PC-3 (cell line): ENCODE measurements at regions of chr9 and their contacts with region 1.

Region 1: GRCh38 chr9:72022841-72023240 is 37.6 kb downstream of the C9orf57 start:
- DNase-seq: peak; percentile 64
- ATAC-seq: peak; percentile 81
- H3K4me3 ChIP-seq: no peak overlapping the region
- H3K27ac ChIP-seq: no peak overlapping the region
- H3K4me1 ChIP-seq: peaks cover 8% of the 10 kb centered on the region; the same call in 1 of the 2 replicates
- H3K27me3 ChIP-seq: no peaks in the 10 kb centered on the region
- CTCF ChIP-seq: no peak

Region 2: GRCh38 chr9:71806901-71807307 is 215.9 kb before region 1 on chr9:
- CTCF ChIA-PET with region 1: no interaction called
- POLR2A ChIA-PET with region 1: no interaction called
- intact Hi-C with region 1: loop called (anchors 1 kb)
- DNase-seq: peak; percentile 81
- ATAC-seq: peak; percentile 99
- H3K4me3 ChIP-seq: no peak overlapping the region
- H3K27ac ChIP-seq: no peak overlapping the region
- H3K4me1 ChIP-seq: no peaks in the 10 kb centered on the region; the same call in 1 of the 2 replicates
- H3K27me3 ChIP-seq: no peaks in the 10 kb centered on the region
- CTCF ChIP-seq: peak; percentile 89

Region 3: DNA sequence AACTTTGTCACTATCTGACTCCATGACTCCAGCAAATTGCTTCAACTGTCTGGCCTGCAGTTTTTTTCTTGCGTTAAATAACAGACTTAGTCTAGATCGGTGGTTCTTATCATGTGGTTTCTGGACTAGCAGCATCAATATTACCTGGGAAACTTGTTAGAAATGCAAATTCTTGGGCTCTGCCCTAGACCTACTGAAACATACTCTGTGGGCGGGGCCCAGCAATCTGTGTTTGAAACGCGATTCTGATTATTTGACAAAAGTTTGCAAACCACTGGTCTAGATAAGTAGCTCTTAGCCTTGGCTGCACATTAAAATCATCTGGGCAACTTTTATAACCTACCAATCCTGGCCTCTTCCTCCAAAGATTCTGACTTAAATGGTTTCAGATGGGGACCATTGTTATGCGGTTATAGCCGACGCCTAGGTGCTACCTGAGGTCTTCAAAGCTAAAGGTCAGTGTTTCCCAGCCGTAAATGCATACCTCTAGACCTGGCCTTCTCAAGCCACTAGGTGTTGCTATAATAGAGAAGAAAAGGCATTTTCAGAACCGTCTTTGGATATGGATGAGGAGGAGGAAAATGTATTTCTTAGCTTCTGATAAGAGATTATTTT is 37.4 kb before region 1 on chr9:
- CTCF ChIA-PET with region 1: interaction called, 4 read pairs
- POLR2A ChIA-PET with region 1: no interaction called
- intact Hi-C with region 1: loop called (anchors 5 kb)
- DNase-seq: peak; percentile 27
- ATAC-seq: 0 out of 2 replicates have a peak, but pooled peaks have one; percentile 23
- H3K4me3 ChIP-seq: no peak overlapping the region
- H3K27ac ChIP-seq: 0 out of 2 replicates have a peak overlapping the region, but pooled peaks have one; percentile 12
- H3K4me1 ChIP-seq: peaks cover 32% of the 10 kb centered on the region
- H3K27me3 ChIP-seq: no peaks in the 10 kb centered on the region
- CTCF ChIP-seq: peak; percentile 42